Pancreas (tissue), 10 donors: ENCODE measurements at regions of chr9 and their contacts with region 1.

Region 1: GRCh38 chr9:113913426-113914195 is 37.5 kb downstream of the ZNF618 start:
- DNase-seq: peak in 1 of 6 donors; percentile 49
- ATAC-seq: peak in 2 of 4 donors; percentile 9 to 35
- H3K4me3 ChIP-seq: no peak overlapping the region
- H3K27ac ChIP-seq: peak overlapping the region in 1 of 4 donors; percentile 95
- H3K4me1 ChIP-seq: peaks cover 41 to 45% (median 44%) of the 10 kb centered on the region in 3 donors
- H3K27me3 ChIP-seq: no peaks in the 10 kb centered on the region
- CTCF ChIP-seq: no peak

Region 2: DNA sequence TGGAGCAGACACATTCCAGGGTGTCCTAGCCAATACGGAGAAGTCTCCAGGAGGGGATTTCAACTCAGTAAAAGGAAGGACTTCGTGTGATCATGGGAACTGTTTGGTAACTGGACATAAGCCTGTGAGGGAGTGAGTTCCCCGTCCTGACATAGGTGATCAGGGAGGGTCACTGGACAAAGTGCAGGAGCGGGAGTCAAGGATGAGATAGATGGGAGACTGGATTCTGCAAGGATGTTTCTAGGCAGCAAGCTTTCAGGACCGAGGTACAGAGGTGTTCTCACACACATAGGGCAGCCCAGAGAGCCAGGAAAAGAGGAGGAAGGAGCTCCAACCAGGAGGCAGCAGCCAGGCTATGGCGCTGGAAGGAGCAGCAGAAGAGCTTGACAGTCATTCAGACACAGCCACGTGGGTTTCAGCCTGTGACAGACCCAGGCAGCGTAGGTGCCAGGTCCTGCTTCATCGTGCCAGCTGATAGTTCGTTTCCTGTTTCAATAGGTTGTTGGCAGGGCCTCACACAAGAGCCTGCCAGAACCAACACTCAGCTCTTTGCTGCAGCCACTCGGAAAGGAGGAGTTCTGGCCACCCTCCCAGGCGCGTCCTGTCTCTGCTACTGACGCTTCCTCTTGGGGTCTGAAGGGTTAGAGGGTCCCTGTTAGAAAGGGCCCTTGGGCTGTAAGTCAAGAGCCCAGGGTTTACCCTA is 80.4 kb after region 1 on chr9:
- intact Hi-C with region 1: loop called in 1 of 3 experiments (anchors 10 kb)
- DNase-seq: peak; percentile 81 to 96 (median 92)
- ATAC-seq: peak; percentile 94 to 98 (median 96)
- H3K4me3 ChIP-seq: no peak overlapping the region
- H3K27ac ChIP-seq: peak overlapping the region in 2 of 4 donors; percentile 46 to 68
- H3K4me1 ChIP-seq: peaks cover 12 to 22% (median 16%) of the 10 kb centered on the region in 3 donors
- H3K27me3 ChIP-seq: no peaks in the 10 kb centered on the region
- CTCF ChIP-seq: no peak